Left colon (tissue), 2 donors: ENCODE measurements at regions of chr1 and their contacts with region 1.

Region 1: DNA sequence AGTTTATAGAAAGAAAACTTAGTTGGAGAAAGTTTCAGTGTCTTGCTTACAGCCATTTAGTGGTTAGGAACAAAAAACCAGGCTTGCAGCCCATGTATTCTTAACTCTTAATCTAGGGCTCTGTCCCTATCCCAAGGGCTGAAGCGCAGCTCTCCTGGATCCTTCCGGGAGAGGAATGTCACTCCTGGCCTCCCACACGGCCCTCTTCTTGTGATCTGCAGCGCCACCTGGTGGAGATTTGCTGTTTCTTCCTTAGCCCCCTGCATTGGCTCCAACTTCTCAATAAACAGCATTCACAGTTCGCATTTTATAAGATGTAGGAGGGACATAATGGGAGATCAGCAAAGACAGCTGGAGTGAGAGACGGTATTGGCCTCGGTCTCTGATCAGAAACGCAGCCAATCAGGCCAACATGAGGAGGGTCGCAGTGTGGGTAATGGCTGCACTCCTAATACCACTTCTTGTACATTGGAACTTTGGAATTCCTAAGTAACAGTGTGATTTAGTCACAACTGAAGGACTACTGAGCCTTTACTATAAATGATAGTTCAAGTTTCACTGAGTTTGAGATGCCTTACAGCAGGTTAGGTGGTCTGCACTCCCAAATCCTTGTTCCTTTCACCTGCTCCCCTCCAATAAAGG is 283.4 kb downstream of the ASTN1 start:
- DNase-seq: peak; percentile 33 to 78
- ATAC-seq: peak; percentile 76

Region 2: GRCh38 chr1:176374967-176375569 is 506.0 kb before region 1 on chr1:
- intact Hi-C with region 1: loop called in 1 of 2 experiments (anchors 5 kb)
- DNase-seq: peak; percentile 42 to 78
- ATAC-seq: peak; percentile 70